Activated T-helper 1 cell treated with anti-CD3 and anti-CD28 coated beads, Interleukin-12 subunit alpha, Interleukin-12 subunit beta, Interleukin-2, Interleukin-4 antibody, amounts not matched to agents 30 ng/mL and 10 ng/mL and 1 ng/mL, durations not matched to agents 14 hours and 24 hours and 36 hours (primary cell): ENCODE measurements at regions of chr19 and their contacts with region 1.

Region 1: GRCh38 chr19:10251792-10252694 is at the start of gene MRPL4:
- DNase-seq: peak; percentile 95
- H3K4me3 Mint-ChIP-seq: peak within 1 kb of the TSS; percentile 95
- H3K27ac Mint-ChIP-seq: peak within 1 kb of the TSS; percentile 96
- H3K4me1 Mint-ChIP-seq: peaks cover 19% of the 10 kb centered on the region
- H3K27me3 Mint-ChIP-seq: no peaks in the 10 kb centered on the region
- total RNA-seq, gene MRPL4: 163 and 168 TPM in 2 replicates

Region 2: GRCh38 chr19:9818734-9819589 is 433.1 kb before region 1 on chr19 and contains the start of gene FBXL12:
- intact Hi-C with region 1: loop called (anchors 1 kb)
- DNase-seq: peak; percentile 100
- H3K4me3 Mint-ChIP-seq: peak within 1 kb of the TSS; percentile 90
- H3K27ac Mint-ChIP-seq: peak within 1 kb of the TSS; percentile 87
- H3K4me1 Mint-ChIP-seq: peaks cover 27% of the 10 kb centered on the region
- H3K27me3 Mint-ChIP-seq: no peaks in the 10 kb centered on the region
- total RNA-seq, gene FBXL12: 19.4 and 20.7 TPM in 2 replicates

Region 3: DNA sequence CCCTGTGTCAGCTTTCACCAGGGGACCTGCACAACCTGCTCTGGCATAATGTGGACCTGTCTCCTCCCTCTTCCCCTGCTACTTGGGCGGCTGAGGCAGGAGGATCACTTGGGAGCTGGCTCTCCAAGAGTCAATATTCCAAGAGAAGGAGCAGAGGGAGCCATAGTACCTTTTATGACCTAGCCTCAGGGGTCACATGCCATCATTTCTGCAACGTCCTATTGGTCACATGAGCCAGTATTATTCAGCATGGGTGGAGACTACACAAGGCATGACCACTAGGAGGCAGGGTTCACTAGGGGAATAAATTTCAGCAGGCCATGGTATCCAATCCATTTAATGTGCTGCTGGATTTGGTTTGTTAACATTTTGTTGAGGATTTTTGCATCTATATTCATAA is 177.9 kb before region 1 on chr19:
- intact Hi-C with region 1: loop called (anchors 1 kb)
- DNase-seq: peak; percentile 22
- H3K4me3 Mint-ChIP-seq: no peak overlapping the region
- H3K27ac Mint-ChIP-seq: no peak overlapping the region
- H3K4me1 Mint-ChIP-seq: no peaks in the 10 kb centered on the region
- H3K27me3 Mint-ChIP-seq: peaks cover 18% of the 10 kb centered on the region

Region 4: DNA sequence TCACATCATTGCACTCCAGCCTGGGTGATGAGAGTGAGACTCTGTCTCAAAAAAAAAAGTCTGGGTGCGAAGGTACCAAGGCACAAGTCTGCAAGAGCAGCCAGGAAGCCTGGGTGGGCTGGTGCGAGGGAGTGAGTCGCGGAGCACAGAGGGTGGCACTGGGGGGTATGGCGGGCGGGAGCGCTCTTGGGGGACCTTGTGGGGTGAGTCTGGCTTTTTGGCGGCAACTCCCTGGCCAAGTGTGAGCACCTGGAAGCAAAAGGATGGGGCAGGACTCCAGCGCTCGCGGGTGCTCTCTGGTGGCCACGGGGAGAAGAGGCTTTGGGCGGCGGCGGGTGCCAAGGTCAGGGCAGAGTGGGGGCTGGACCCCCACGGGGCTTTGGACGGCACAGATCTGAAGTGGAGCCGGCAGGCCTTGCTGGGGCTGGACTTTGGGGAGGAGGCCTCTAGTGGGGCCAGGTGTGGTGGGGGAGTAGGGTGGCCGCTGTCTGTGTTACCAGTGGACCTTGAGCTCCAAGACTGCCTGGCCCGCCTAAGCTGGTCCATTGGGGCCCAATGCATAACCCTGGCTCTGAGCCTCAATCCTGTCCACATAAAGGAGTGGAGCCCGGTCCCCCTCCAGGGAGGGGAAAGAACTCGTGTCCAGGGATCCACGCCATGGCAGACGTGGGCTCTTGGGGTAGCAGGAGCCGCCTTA is 139.0 kb before region 1 on chr19:
- intact Hi-C with region 1: loop called (anchors 2 kb)
- DNase-seq: peak; percentile 41
- H3K4me3 Mint-ChIP-seq: peak overlapping the region; percentile 70
- H3K27ac Mint-ChIP-seq: peak overlapping the region; percentile 90
- H3K4me1 Mint-ChIP-seq: peaks cover 28% of the 10 kb centered on the region
- H3K27me3 Mint-ChIP-seq: no peaks in the 10 kb centered on the region

Region 5: DNA sequence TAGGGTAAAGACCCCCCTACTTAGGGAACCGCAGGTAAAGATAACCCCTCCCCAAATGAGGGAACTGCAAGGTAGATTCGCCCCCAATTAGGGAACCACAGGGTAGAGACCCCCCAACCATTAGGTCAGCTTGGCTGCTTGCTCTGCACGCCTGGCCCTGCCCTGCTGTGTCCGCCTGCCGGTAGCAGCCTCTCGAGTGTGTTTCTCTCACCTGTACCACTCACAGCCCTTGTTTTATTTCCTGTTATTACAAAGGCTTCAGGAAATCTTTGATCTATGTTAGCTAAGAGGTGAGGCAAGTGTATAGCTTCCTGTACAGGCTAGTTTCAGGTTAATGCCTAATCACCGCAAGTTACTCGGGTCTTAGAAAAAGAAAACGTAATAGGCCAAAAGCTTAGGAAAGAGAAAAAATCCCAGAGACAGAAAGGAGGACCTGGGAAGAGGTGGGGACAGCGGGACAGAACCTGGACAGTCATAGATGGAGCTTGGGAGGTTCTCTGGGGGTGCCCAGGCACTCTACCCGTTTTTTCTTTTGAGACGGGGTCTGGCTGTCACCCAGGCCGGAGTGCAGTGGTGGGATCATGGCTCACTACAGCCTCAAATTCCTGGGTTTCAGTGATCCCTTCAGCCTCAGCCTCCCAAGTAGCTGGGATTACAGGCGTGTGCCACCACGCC is 109.2 kb before region 1 on chr19:
- intact Hi-C with region 1: loop called (anchors 2 kb)
- DNase-seq: peak; percentile 14
- H3K4me3 Mint-ChIP-seq: peak overlapping the region; percentile 51
- H3K27ac Mint-ChIP-seq: peak overlapping the region; percentile 60
- H3K4me1 Mint-ChIP-seq: peaks cover 24% of the 10 kb centered on the region
- H3K27me3 Mint-ChIP-seq: no peaks in the 10 kb centered on the region

Region 6: DNA sequence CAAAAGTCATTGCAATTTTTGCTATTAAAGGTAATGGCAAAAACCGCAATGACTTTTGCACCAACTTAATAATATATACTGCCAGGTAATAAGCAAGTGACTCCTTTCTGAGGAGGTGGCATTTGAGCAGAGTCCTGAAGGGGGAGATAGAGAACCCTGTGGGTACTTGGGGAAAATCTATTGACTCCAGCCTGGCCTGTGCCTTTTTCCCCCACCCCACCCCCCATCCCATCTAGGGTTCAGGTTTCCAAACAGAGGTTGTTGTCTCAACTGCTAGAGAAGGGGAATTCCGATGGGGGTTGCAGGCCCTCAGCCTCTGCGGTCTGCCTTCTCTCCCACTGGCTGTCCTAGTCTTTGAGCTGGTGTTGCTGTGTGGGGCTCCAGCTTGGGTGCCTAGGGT is 32.4 kb before region 1 on chr19:
- intact Hi-C with region 1: loop called (anchors 1 kb)
- DNase-seq: peak; percentile 22
- H3K4me3 Mint-ChIP-seq: no peak overlapping the region
- H3K27ac Mint-ChIP-seq: no peak overlapping the region
- H3K4me1 Mint-ChIP-seq: peaks cover 4% of the 10 kb centered on the region
- H3K27me3 Mint-ChIP-seq: no peaks in the 10 kb centered on the region